AG04450 (cell line): ENCODE measurements at regions of chr2 and their contacts with region 1.

Region 1: GRCh38 chr2:152175458-152176325 is at the start of gene STAM2:
- DNase-seq: peak; percentile 83
- H3K4me3 ChIP-seq: peak within 1 kb of the TSS; percentile 90
- H3K27ac ChIP-seq: peak within 1 kb of the TSS; percentile 96
- H3K27me3 ChIP-seq: no peaks in the 10 kb centered on the region
- CTCF ChIP-seq: peak; percentile 96
- polyA plus RNA-seq, gene STAM2: 27.6 and 38.0 TPM in 2 replicates

Region 2: GRCh38 chr2:152036611-152037469 is 138.9 kb before region 1 on chr2:
- CTCF ChIA-PET with region 1: interaction called, 40 read pairs
- POLR2A ChIA-PET with region 1: no interaction called
- DNase-seq: peak; percentile 45
- H3K4me3 ChIP-seq: no peak overlapping the region
- H3K27ac ChIP-seq: no peak overlapping the region
- H3K27me3 ChIP-seq: peaks cover 18% of the 10 kb centered on the region
- CTCF ChIP-seq: peak; percentile 91

Region 3: GRCh38 chr2:152093464-152093863 is 82.2 kb before region 1 on chr2:
- CTCF ChIA-PET with region 1: no interaction called
- POLR2A ChIA-PET with region 1: no interaction called
- DNase-seq: no peak
- H3K4me3 ChIP-seq: no peak overlapping the region
- H3K27ac ChIP-seq: no peak overlapping the region
- H3K27me3 ChIP-seq: peaks cover 30% of the 10 kb centered on the region
- CTCF ChIP-seq: no peak

Region 4: DNA sequence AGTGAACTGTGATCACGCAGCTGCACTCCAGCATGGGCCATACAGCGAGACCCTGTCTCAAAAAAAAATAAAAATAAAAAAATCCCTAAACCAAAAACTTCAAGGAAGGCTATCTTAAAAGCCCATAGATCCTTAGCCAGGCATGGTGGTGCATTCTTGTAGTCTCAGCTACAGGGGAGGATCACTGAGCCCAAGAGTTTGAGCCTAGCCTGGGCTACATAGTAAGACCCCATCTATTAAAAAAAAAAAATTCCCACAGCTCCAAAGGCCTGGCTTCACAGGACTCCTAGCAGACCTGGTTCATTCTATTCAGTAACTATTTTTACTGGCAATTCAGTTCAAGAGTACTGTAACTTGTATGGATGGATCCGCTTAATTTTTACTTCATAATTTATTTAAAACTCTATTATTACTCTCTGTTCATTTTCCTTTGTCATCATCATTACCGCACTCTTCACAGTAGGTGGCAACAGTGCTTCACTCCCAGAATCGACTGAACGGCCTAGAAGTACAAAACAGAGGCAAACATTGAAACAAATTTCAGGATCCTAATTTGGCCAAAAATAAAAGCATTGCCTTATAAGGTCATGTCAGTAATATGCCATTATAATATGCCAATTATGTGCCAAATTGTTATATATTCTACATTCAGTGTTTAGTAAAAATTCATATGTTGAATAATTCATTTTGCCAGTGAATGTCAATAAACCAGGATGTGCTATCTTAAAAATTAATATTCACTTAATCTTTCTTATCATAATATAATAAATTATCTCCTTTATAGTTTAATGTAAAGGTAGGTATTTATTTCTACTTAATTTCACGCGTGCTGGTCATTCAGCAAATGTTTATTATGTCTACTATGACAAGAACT is 14.2 kb after region 1 on chr2:
- CTCF ChIA-PET with region 1: interaction called, 23 read pairs
- POLR2A ChIA-PET with region 1: interaction called, 7 read pairs
- DNase-seq: peak; percentile 58
- H3K4me3 ChIP-seq: no peak overlapping the region
- H3K27ac ChIP-seq: no peak overlapping the region
- H3K27me3 ChIP-seq: no peaks in the 10 kb centered on the region
- CTCF ChIP-seq: peak; percentile 87

Region 5: DNA sequence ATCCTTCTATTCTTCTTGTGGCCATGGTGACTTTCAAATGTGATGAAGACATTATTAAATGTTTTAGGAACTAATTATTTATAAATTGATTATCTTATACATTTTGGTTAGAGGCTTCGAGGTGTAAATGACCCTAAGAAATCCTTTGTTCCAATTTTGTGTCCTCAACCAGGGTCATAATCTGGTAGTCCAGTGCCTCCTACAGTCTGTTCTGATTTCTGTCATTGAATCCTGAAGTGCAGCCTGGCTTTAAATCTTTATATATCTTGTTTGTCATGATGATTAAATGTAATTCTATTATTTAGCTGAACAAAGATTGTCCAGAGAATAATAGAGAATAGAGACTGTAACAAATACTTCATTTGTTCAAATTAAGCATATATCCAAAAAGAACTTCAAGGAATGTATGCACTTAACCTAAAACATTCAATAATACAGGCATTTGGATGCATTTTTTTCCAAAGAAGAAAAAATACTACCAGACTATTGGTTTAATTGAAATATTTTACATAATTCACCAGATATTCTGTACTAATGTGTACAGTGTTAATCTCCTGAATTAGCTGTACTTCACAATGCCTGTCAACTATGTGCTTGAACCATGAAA is 451.8 kb after region 1 on chr2:
- CTCF ChIA-PET with region 1: interaction called, 30 read pairs
- POLR2A ChIA-PET with region 1: interaction called, 3 read pairs
- DNase-seq: no peak
- H3K4me3 ChIP-seq: no peak overlapping the region
- H3K27ac ChIP-seq: no peak overlapping the region
- H3K27me3 ChIP-seq: no peaks in the 10 kb centered on the region
- CTCF ChIP-seq: peak; percentile 72

Region 6: DNA sequence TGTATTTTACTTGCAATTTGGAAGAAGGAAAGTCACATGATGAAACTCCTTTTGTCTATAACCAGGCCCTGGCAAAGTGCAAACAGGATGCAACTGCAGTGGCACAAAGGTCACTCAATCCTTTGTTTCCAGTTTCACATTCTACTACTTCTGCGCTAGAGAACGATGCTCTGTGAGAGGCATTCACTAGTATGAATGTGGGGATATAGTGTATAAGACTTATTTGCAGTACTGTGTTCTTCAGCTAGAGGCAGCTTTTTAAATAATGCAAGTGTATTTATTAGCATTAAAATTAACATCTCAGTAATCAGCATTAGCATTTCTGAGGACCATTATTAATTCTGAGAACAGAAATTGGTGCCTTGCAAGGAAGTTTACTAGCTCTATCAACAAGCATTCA is 472.6 kb after region 1 on chr2:
- CTCF ChIA-PET with region 1: interaction called, 32 read pairs
- POLR2A ChIA-PET with region 1: interaction called, 4 read pairs
- DNase-seq: no peak
- H3K4me3 ChIP-seq: no peak overlapping the region
- H3K27ac ChIP-seq: no peak overlapping the region
- H3K27me3 ChIP-seq: no peaks in the 10 kb centered on the region
- CTCF ChIP-seq: peak; percentile 40

Region 7: DNA sequence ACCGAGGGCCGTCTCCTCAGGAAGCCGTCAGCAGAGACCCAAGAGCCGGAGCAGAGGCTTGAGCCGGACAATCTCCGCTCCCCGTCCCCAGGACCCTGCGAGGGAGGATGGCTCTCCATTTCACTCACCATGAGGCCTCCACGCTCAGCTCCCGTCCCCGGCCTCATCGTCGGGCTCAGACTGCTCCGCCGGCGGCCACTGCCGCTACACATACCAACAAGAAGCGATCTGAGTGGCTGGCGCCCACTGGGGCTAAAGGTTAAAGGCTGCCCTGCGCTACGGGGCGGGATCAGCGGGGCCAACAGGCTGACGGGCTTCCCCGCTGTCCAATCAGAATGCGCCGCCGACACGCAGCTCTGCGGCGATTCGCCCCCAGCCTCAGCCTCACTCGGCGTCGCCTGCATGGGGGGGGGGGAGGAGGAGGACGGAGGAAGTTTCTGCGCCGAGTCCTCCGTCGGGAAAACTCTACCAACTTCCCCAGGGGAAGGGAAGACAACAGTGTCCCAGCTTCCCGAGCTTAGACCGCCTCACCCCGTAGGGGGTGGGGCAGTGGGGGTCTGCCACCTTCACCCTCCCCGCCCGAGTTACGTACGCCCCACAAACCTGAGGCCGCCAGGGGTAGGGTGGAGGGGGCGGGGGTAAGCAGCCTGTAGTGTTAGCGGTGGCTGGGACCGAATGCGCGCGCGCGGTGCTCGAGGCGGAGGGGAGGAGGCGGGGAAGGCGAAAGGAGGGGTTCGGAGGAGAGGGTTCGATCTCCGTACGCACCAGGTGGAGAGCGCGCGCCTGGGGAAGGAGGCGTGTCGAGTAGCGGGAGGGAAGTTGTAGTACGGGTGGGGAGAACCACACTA is 541.8 kb after region 1 on chr2 and contains the start of gene PRPF40A:
- CTCF ChIA-PET with region 1: interaction called, 9 read pairs
- POLR2A ChIA-PET with region 1: interaction called, 16 read pairs
- DNase-seq: peak; percentile 96
- H3K4me3 ChIP-seq: peak within 1 kb of the TSS; percentile 76
- H3K27ac ChIP-seq: peak within 1 kb of the TSS; percentile 95
- H3K27me3 ChIP-seq: no peaks in the 10 kb centered on the region
- CTCF ChIP-seq: no peak
- polyA plus RNA-seq, gene PRPF40A: 87.1 and 113 TPM in 2 replicates